ENCODE measurements at regions of chr11 and their contacts with region 1.

Region 1: DNA sequence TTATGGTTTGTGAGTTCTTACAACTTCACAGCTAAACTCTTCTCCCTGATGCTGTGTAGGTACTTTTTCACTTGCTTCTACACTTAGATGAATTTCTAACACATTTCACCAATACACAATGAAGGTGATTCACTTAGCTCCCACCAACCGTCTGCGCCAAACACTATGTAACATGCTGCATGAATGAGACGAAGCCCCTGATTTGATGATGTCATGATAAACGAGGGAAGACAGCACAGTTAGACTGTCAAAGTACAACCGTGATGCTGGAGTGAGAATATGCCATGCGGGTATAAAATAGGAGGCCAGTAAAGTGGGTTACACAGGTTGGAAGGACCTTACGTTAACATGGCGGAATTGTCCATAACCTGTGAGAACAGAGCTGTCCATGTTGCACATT is 100.8 kb downstream of the KCNA4 start:
- DNase-seq: no peak
- H3K4me3 ChIP-seq: no peak overlapping the region
- H3K27ac ChIP-seq: no peak overlapping the region
- H3K4me1 ChIP-seq: no peaks in the 10 kb centered on the region
- H3K27me3 ChIP-seq: no peaks in the 10 kb centered on the region
- CTCF ChIP-seq: no peak

Region 2: DNA sequence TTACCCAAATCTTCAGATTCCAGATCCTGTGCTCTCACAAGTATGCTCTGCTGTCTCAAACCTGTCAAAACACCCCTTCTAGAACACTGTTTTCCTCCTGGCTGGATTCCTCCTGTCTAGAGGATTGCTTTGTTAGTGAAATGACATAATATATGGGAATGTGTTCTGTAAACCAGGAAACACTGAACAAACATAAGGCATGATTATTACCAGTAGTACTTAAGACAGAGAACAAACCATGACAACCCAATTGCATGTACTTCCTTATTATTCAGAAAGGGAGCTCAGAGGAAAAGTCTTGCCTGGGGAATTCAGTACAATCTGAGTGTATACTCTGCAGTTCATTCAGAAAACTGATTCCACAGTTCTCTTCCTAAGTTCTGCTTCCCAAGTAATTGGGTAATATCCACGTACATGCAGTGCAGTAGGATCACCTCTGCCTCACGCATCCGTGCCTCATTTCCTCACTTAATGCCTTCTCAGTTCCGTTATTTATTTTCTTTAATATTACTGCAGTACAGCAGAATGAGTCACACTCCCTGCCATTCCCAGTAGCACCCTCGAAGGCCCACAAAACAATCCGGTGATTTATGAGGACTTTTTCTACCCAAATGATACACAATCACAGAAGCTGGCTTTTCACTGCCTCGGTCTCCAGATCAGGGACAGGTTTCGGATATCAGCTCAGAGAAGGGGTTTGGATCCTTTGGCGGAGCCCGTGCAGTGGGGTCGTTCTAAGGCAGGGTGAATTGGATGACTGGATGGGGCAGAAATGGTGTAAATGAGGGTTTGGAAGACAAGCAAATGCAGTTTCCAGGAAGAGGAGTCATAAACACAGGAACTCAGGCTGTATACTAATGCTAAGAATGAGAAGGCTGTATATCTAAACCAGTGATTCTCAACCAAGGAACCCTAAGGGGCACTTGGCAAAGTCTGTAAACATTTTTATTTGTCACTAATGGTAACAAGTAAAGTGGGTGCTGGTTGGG is 796.0 kb before region 1 on chr11:
- intact Hi-C with region 1: no loop called
- DNase-seq: no peak
- H3K4me3 ChIP-seq: no peak overlapping the region
- H3K27ac ChIP-seq: no peak overlapping the region
- H3K4me1 ChIP-seq: no peaks in the 10 kb centered on the region
- H3K27me3 ChIP-seq: no peaks in the 10 kb centered on the region
- CTCF ChIP-seq: no peak

Region 3: DNA sequence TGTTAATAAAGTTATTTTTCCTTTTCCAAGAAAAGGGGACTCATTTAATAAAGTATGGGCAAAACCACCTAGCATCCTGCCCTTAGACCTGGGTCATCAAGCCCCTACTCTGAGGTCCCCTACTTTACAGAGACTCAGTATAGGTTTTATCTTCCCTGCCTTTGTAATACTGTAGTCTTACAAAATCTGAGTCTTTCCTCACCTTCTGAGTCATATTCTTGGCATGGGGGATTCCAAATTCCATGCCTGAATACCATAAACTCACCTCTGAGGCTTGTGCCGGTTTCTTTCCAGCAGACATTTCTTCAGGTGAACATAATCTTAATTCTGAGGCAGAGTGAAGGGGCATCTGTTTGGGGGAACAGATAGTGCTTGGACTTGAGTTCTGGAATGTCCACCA is 181.8 kb before region 1 on chr11:
- intact Hi-C with region 1: no loop called
- DNase-seq: no peak
- H3K4me3 ChIP-seq: no peak overlapping the region
- H3K27ac ChIP-seq: no peak overlapping the region
- H3K4me1 ChIP-seq: no peaks in the 10 kb centered on the region
- H3K27me3 ChIP-seq: no peaks in the 10 kb centered on the region
- CTCF ChIP-seq: no peak

Region 4: GRCh38 chr11:31246451-31247165 is 1330.6 kb after region 1 on chr11:
- intact Hi-C with region 1: loop called (anchors 5 kb)
- DNase-seq: peak in 1 of 2 donors; percentile 23
- H3K4me3 ChIP-seq: no peak overlapping the region
- H3K27ac ChIP-seq: no peak overlapping the region
- H3K4me1 ChIP-seq: no peaks in the 10 kb centered on the region
- H3K27me3 ChIP-seq: no peaks in the 10 kb centered on the region
- CTCF ChIP-seq: no peak